Right ventricle myocardium inferior (tissue), 1 donor: ENCODE measurements at regions of chr4 and their contacts with region 1.

Region 1: DNA sequence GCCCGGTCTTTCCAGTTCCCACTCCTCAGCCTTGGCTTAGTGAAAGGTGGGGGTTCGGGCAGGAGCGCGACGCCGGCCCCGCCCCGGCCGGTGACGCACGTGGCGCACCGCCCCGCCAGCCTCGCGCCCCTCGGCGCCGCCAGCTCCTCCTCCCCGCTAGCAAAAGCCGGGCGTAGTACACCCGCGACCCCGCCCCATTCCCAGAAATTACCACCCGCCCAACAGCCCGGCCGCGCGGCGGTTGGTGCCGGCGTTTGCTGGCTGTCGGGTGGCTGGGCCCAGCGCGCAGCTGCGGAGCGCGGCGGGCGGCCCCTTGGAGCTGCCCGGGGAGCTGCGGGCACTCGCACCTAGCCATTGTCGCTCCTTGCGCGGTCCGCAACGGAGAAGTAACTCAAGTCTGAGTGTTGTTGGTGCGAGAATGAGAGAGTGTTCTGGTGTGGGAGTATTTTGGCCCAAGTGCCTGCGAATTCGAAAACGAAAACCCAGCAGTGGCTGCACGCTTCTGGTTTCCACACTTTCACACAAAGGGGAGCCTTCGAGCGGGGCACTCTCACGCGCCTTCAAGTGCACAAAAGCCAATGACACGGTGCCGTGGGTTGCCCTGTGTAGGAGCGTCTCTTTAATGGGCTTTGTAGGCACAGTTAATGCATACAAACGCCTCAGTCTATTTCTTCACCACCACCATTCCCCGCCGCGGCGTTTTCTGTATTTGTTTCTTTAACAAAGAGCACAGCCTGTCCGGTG is 1.0 kb upstream of the ELF2 start:
- DNase-seq: peak; percentile 98
- ATAC-seq: peak; percentile 88

Region 2: DNA sequence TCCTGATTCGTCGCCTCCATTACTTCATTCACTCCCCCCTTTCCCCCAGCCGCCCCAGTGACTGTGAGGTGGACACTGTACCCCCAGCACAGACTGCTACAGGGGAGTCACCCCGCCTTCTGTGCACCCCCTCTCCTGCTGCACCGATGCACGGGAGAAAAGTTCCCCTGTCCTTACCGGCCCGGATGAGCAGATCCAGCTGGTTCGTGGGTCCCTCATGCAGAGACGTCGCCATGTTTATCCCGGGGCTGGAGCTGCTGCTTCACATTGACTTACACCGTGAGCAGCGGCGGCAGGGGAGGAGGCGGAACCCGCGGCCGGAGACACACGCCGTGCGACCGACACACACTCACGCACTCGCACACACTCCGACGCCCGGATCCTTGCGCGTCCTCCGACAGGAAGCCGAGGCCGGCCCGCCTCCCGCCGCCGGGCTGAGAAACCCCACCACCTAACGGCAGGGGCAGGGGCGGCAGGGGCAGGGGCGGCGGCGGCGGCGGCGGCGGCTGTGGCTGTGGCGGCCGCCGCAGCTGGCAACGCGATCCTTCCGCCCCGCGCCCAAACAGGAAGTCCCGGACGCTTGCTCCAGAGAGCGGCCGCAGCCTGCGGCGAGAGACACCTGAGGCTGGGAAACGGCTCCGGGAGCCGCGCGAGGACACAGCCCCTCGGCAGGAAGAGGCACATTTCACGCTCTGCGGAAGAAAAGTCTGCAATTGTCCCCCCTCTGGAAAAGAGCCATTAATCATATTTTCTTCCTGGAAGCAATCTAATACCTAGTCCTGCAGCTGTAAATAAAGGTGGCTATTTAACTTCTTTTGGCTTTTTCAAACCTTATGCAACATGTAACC is 93.9 kb before region 1 on chr4:
- intact Hi-C with region 1: loop called (anchors 5 kb)
- DNase-seq: peak; percentile 94
- ATAC-seq: peak; percentile 81

Region 3: GRCh38 chr4:139301113-139301820 is 123.2 kb after region 1 on chr4 and contains the start of gene NAA15:
- intact Hi-C with region 1: loop called (anchors 2 kb)
- DNase-seq: peak; percentile 98
- ATAC-seq: peak; percentile 98
- total RNA-seq, gene NAA15: 36.5 TPM